Activated CD4-positive, alpha-beta T cell treated with anti-CD3 and anti-CD28 coated beads for 36 hours (primary cell): ENCODE measurements at regions of chr3 and their contacts with region 1.

Region 1: DNA sequence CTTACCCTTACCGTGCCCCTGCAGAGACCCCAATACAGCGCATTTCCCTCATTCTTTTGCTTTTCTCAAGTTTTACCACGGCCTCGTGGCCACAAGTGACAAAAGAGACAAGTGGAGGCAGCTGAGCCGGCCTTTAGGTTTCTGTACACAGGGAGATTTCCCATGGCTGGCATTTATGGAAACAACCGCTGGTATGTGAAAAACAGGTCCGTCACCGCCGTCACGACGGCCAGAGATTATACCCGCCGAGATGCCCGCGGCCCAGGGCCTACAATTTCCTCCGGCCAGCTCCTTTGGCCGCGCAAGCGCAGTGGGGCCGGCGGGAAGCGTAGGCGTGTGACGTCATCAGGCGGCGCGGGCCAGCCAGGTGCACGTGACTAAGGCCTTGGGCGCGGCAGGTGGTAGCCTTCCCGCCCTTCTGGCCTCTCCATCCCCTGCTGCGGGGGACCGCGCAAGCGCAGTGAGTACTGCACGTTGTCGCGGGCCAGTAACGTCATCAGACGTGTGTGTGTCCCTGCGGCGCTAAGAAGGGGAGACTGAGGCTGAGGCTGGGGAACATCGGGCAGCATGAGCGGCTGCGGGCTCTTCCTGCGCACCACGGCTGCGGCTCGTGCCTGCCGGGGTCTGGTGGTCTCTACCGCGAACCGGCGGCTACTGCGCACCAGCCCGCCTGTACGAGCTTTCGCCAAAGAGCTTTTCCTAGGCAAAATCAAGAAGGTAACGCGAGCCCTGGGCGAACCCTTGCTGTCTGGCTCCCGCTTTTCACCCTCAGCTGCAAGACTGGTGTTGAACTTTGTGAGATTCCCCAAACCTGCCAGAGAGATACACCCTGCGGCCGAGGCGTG is at the start of gene ACAD9:
- DNase-seq: peak; percentile 98
- ATAC-seq: peak; percentile 92
- H3K4me3 Mint-ChIP-seq: peak within 1 kb of the TSS; percentile 97
- H3K27ac Mint-ChIP-seq: peak within 1 kb of the TSS; percentile 99
- H3K4me1 Mint-ChIP-seq: peaks cover 66% of the 10 kb centered on the region
- H3K27me3 Mint-ChIP-seq: no peaks in the 10 kb centered on the region
- total RNA-seq, gene ACAD9: 60.0 to 70.7 TPM

Region 2: GRCh38 chr3:128617557-128618397 is 261.6 kb before region 1 on chr3:
- CTCF ChIA-PET with region 1: interaction called, 14 read pairs
- POLR2A ChIA-PET with region 1: interaction called, 3 read pairs
- intact Hi-C with region 1: loop called (anchors 1 kb)
- DNase-seq: peak; percentile 100
- ATAC-seq: peak; percentile 86
- H3K4me3 Mint-ChIP-seq: peak overlapping the region; percentile 92
- H3K27ac Mint-ChIP-seq: peak overlapping the region; percentile 97
- H3K4me1 Mint-ChIP-seq: peaks cover 33% of the 10 kb centered on the region
- H3K27me3 Mint-ChIP-seq: no peaks in the 10 kb centered on the region

Region 3: GRCh38 chr3:128794770-128795649 is 84.3 kb before region 1 on chr3:
- CTCF ChIA-PET with region 1: interaction called, 4 read pairs
- POLR2A ChIA-PET with region 1: interaction called, 3 read pairs
- intact Hi-C with region 1: loop called in 1 of 2 experiments (anchors 2 kb)
- DNase-seq: peak; percentile 76
- ATAC-seq: peak; percentile 68
- H3K4me3 Mint-ChIP-seq: peak overlapping the region; percentile 37
- H3K27ac Mint-ChIP-seq: peak overlapping the region; percentile 95
- H3K4me1 Mint-ChIP-seq: peaks cover 91% of the 10 kb centered on the region
- H3K27me3 Mint-ChIP-seq: no peaks in the 10 kb centered on the region

Region 4: GRCh38 chr3:128922804-128923459 is 43.6 kb after region 1 on chr3:
- CTCF ChIA-PET with region 1: interaction called, 4 read pairs
- POLR2A ChIA-PET with region 1: no interaction called
- intact Hi-C with region 1: loop called (anchors 1 to 2 kb)
- DNase-seq: peak; percentile 72
- ATAC-seq: peak; percentile 78
- H3K4me3 Mint-ChIP-seq: peak overlapping the region; percentile 42
- H3K27ac Mint-ChIP-seq: peak overlapping the region; percentile 58
- H3K4me1 Mint-ChIP-seq: peaks cover 32% of the 10 kb centered on the region
- H3K27me3 Mint-ChIP-seq: no peaks in the 10 kb centered on the region

Region 5: DNA sequence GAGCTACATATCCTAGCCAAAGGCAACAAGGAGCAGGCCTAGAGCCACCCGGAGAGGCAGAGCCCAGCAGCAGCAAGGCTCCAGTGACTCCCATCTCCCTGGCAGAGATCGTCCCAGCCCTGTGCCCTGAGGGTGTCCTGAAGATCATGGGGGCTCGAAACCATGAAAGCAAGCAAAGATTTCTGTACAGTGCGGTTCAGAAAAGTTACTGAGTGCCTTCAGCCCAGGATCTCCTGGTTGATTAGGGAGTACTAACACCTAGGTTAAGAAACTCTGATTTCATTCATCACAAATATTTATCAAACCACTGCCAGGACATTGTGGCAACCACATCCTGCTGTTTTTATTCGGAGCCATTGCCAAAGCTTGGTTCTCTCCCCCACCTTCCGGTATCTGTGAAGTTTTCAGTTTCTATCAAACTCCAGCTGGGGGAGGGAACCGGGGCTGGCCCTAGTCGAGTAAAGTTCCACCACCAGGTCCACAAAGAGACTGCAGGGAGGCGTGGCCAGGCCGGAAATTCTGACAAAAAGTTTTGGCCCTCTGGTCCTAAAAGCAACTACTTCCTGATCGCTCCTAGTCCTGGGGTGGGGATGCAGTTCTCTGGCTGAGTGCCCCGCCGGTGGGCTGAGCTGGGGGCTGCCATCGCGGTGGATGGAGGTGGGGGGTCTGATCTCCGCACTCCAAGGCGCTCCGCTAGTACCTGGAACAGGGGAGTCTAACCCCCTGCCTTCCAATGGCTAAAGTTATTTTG is 241.1 kb after region 1 on chr3:
- CTCF ChIA-PET with region 1: interaction called, 3 read pairs
- POLR2A ChIA-PET with region 1: interaction called, 6 read pairs
- intact Hi-C with region 1: loop called in 1 of 2 experiments (anchors 1 kb)
- DNase-seq: peak; percentile 96
- ATAC-seq: peak; percentile 69
- H3K4me3 Mint-ChIP-seq: peak overlapping the region; percentile 91
- H3K27ac Mint-ChIP-seq: peak overlapping the region; percentile 95
- H3K4me1 Mint-ChIP-seq: peaks cover 46% of the 10 kb centered on the region
- H3K27me3 Mint-ChIP-seq: no peaks in the 10 kb centered on the region

Region 6: GRCh38 chr3:129316131-129317013 is 437.0 kb after region 1 on chr3:
- CTCF ChIA-PET with region 1: no interaction called
- POLR2A ChIA-PET with region 1: interaction called, 3 read pairs
- intact Hi-C with region 1: loop called in 1 of 2 experiments (anchors 1 kb)
- DNase-seq: peak; percentile 93
- ATAC-seq: peak; percentile 39
- H3K4me3 Mint-ChIP-seq: peak overlapping the region; percentile 88
- H3K27ac Mint-ChIP-seq: peak overlapping the region; percentile 58
- H3K4me1 Mint-ChIP-seq: peaks cover 22% of the 10 kb centered on the region
- H3K27me3 Mint-ChIP-seq: no peaks in the 10 kb centered on the region